ENCODE measurements at regions of chr1 and their contacts with region 1.

Region 1: DNA sequence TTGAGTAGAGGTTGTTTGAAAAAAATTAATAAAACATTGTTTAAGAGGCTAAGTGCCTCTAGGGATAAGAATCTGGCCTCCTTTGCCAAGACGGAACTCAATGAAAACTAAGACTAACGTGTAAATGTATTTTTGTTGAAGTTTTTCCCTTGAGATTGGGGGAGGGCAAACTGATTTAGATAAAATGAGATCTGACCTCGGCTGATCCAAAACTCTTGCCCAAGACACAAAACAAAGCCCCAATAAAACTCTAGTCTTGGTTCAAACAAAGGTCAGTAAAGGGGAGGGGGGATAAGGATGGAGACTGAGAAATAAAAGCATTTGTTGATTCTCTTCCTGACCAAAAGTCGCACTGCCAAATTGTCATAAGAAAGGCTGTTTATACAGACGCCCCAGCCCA is 134.8 kb upstream of the DPT start:
- DNase-seq: peak in 1 of 5 donors; percentile 14
- ATAC-seq: peak in 3 of 4 donors; percentile 39 to 51 (median 49)
- H3K4me3 ChIP-seq: no peak overlapping the region
- H3K27ac ChIP-seq: peak overlapping the region in 10 of 12 donors; percentile 11 to 60 (median 40)
- H3K4me1 ChIP-seq: peaks cover 0 to 16% (median 3%) of the 10 kb centered on the region in 12 donors
- H3K27me3 ChIP-seq: no peaks in the 10 kb centered on the region
- CTCF ChIP-seq: no peak
- POLR2A ChIP-seq: no peak

Region 2: GRCh38 chr1:168845140-168845539 is 18.6 kb before region 1 on chr1:
- intact Hi-C with region 1: no loop called
- DNase-seq: no peak
- ATAC-seq: peak in 2 of 4 donors; percentile 43 to 75
- H3K4me3 ChIP-seq: no peak overlapping the region
- H3K27ac ChIP-seq: no peak overlapping the region
- H3K4me1 ChIP-seq: peaks cover 0 to 13% (median 2%) of the 10 kb centered on the region in 12 donors
- H3K27me3 ChIP-seq: no peaks in the 10 kb centered on the region
- CTCF ChIP-seq: no peak
- POLR2A ChIP-seq: no peak

Region 3: GRCh38 chr1:168920456-168921094 is 56.8 kb after region 1 on chr1:
- intact Hi-C with region 1: loop called in 1 of 10 experiments (anchors 10 kb)
- DNase-seq: peak in 4 of 5 donors; percentile 29 to 59 (median 42)
- ATAC-seq: peak; percentile 40 to 90 (median 86)
- H3K4me3 ChIP-seq: no peak overlapping the region
- H3K27ac ChIP-seq: peak overlapping the region in 11 of 12 donors; percentile 13 to 80 (median 61)
- H3K4me1 ChIP-seq: peaks cover 0 to 38% (median 12%) of the 10 kb centered on the region in 12 donors
- H3K27me3 ChIP-seq: no peaks in the 10 kb centered on the region
- CTCF ChIP-seq: no peak
- POLR2A ChIP-seq: no peak

Region 4: GRCh38 chr1:168972887-168973286 is 109.1 kb after region 1 on chr1:
- intact Hi-C with region 1: loop called in 1 of 10 experiments (anchors 5 kb)
- DNase-seq: no peak
- ATAC-seq: no peak
- H3K4me3 ChIP-seq: no peak overlapping the region
- H3K27ac ChIP-seq: no peak overlapping the region
- H3K4me1 ChIP-seq: peaks cover 0 to 10% (median 5%) of the 10 kb centered on the region in 12 donors
- H3K27me3 ChIP-seq: no peaks in the 10 kb centered on the region
- CTCF ChIP-seq: no peak
- POLR2A ChIP-seq: no peak

Measured in heart left ventricle (tissue), 16 donors.